Heart right ventricle (tissue), 16 donors: ENCODE measurements at regions of chr18 and their contacts with region 1.

Region 1: GRCh38 chr18:39215920-39216319 is 1650.3 kb upstream of the CELF4 start:
- DNase-seq: no peak
- ATAC-seq: no peak
- H3K4me3 ChIP-seq: no peak overlapping the region
- H3K27ac ChIP-seq: no peak overlapping the region
- H3K4me1 ChIP-seq: no peaks in the 10 kb centered on the region
- H3K27me3 ChIP-seq: no peaks in the 10 kb centered on the region
- CTCF ChIP-seq: no peak

Region 2: GRCh38 chr18:39149211-39149806 is 66.6 kb before region 1 on chr18:
- intact Hi-C with region 1: loop called in 1 of 10 experiments (anchors 10 kb)
- DNase-seq: no peak
- ATAC-seq: no peak
- H3K4me3 ChIP-seq: no peak overlapping the region
- H3K27ac ChIP-seq: no peak overlapping the region
- H3K4me1 ChIP-seq: no peaks in the 10 kb centered on the region
- H3K27me3 ChIP-seq: no peaks in the 10 kb centered on the region
- CTCF ChIP-seq: no peak